ENCODE measurements at regions of chr14 and their contacts with region 1.

Region 1: DNA sequence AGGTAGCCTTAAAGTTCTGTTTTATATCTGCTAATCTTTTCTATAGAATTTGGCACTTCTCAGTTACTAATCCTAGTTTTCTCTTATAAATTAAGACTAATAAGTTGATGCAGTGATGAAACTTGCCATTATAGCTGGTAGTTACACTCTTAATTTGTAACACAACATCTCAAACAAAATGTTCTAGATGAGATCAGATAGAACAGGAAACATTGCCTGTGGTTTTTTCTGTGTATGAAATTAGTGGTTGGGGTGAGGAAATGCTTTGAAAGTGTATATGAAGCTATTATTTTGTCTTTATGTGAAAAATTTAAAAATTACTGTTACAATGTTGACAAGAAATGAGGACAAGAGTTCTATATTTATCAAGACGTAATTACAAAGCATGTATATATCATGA is 91.9 kb downstream of the PCNX1 start:
- DNase-seq: no peak
- H3K4me3 Mint-ChIP-seq: no peak overlapping the region
- H3K27ac Mint-ChIP-seq: peak overlapping the region; percentile 85
- H3K4me1 Mint-ChIP-seq: peaks cover 73% of the 10 kb centered on the region
- H3K27me3 Mint-ChIP-seq: no peaks in the 10 kb centered on the region

Region 2: GRCh38 chr14:70981000-70981952 is 17.8 kb before region 1 on chr14:
- CTCF ChIA-PET with region 1: interaction called, 3 read pairs
- intact Hi-C with region 1: loop called (anchors 2 kb)
- DNase-seq: no peak
- H3K4me3 Mint-ChIP-seq: peak overlapping the region; percentile 3
- H3K27ac Mint-ChIP-seq: peak overlapping the region; percentile 77
- H3K4me1 Mint-ChIP-seq: peaks cover 38% of the 10 kb centered on the region
- H3K27me3 Mint-ChIP-seq: no peaks in the 10 kb centered on the region

Measured in activated naive CD4-positive, alpha-beta T cell treated with anti-CD3 and anti-CD28 coated beads for 36 hours (primary cell).